Activated CD4-positive, alpha-beta T cell treated with anti-CD3 and anti-CD28 coated beads for 36 hours (primary cell): ENCODE measurements at regions of chr3 and their contacts with region 1.

Region 1: DNA sequence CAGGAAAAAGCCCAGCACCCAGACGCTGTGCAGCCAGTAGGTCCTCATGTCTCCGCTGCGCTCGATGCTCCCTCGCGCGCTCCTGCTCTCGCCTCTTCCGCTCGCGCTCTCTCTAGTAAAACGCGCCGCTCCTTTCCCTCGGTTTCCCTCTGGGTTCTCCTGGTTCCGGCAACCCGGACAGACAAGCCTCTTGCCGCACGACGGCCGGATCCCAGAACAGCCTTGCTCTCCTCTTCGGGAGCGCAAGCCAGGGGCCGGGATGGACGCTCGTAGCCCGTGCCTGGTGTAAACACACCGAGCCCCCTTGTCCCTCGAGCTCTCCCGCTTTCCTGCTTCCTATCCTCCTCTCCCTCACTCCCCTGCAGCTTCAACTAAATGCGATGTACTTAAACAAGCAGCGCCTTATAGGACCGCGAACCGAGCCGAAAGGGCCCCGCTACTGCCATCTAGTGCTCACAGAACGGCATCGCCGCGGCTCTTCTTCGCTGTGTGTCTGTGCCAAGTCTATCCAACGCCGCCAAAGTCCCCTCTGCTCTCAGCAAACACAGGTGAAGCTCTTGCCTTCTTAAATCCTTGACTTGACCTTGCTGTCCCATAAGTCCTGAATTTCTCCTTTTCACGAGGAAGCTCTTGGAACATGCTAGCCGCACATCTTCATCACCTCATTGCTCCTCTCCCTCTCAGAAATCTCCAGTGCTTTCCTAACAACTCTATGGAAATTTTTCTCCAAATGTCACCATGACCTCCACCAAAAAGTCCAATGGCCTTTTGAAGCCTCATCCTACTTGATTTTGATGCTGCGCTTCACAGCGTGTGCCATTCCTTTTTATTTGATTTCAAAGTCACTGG is 1037.2 kb downstream of the IGSF11 start:
- DNase-seq: peak; percentile 75
- ATAC-seq: peak; percentile 88
- H3K4me3 Mint-ChIP-seq: no peak overlapping the region
- H3K27ac Mint-ChIP-seq: no peak overlapping the region
- H3K4me1 Mint-ChIP-seq: no peaks in the 10 kb centered on the region
- H3K27me3 Mint-ChIP-seq: peaks cover 3% of the 10 kb centered on the region

Region 2: DNA sequence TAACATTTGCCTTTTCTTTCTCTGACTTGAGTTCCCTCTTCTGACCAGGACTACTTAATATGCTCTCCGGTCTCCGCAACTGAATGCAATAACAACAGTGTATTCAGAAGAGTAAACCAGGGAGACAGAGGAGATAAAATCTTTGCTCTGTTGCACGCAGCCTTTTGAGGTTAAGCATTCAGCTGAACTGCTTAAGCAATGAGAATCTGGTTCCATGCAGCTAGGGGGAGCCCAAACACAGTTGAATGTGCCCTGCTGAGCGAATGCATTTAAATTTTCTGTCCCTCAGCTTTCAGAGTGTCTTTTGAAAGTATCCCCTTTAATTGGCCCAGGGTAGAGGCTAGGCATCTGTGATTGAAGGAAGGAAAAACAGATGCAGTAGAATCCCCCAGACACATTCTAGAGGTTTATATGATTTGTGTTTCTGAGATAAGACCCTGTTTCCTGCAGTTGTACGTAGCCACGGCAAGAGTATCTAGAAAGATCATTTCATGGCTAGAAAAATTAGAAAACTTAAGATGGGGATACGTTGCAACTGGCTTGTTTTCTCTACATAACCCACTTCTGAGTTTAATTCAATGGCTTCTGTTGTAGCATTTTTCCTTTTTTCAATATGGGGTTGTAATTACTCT is 978.2 kb before region 1 on chr3:
- CTCF ChIA-PET with region 1: no interaction called
- POLR2A ChIA-PET with region 1: no interaction called
- intact Hi-C with region 1: loop called (anchors 5 kb)
- DNase-seq: peak; percentile 54
- ATAC-seq: no peak
- H3K4me3 Mint-ChIP-seq: no peak overlapping the region
- H3K27ac Mint-ChIP-seq: no peak overlapping the region
- H3K4me1 Mint-ChIP-seq: no peaks in the 10 kb centered on the region
- H3K27me3 Mint-ChIP-seq: no peaks in the 10 kb centered on the region

Region 3: DNA sequence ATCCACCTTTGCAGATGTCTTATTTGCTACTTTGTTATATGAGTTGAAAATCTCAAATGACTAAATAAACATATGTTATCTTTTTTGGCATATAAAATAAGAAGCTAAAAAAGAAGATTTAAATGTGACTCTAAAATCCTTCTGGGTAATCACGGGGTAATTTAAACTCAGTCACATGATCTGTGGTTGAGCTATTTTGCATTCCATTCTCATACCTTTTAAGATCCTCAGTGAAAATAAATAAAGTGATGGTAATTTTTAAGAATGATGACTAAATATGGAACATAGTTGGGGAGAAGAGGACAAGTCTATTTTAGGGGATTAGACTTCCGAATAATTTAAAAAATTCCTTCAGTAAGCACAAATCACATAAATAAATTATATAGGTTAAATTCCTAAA is 211.1 kb before region 1 on chr3:
- CTCF ChIA-PET with region 1: no interaction called
- POLR2A ChIA-PET with region 1: no interaction called
- intact Hi-C with region 1: no loop called
- DNase-seq: no peak
- ATAC-seq: no peak
- H3K4me3 Mint-ChIP-seq: no peak overlapping the region
- H3K27ac Mint-ChIP-seq: no peak overlapping the region
- H3K4me1 Mint-ChIP-seq: no peaks in the 10 kb centered on the region
- H3K27me3 Mint-ChIP-seq: no peaks in the 10 kb centered on the region

Region 4: DNA sequence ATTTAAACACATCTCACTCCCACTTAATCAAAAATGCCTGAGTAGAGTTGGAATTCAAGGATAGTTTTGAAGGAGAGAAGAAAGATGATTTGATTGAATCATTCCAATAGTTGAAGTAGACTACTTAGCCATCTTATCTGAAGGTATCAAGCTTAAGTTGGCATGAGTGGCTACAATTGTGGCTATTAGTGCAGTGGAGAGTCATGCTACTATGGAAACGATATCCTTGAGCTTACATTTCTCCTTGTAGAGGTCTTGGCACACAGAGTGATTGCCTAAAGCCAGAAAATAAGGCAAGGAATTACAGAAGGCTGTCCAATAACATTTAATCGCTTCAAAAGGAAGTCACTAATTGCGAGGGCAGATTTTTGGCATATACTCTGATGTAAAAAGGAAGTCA is 14.5 kb after region 1 on chr3:
- CTCF ChIA-PET with region 1: interaction called, 13 read pairs
- POLR2A ChIA-PET with region 1: no interaction called
- intact Hi-C with region 1: no loop called
- DNase-seq: no peak
- ATAC-seq: no peak
- H3K4me3 Mint-ChIP-seq: no peak overlapping the region
- H3K27ac Mint-ChIP-seq: no peak overlapping the region
- H3K4me1 Mint-ChIP-seq: no peaks in the 10 kb centered on the region
- H3K27me3 Mint-ChIP-seq: no peaks in the 10 kb centered on the region